Activated T-helper 1 cell treated with anti-CD3 and anti-CD28 coated beads, Interleukin-12 subunit alpha, Interleukin-12 subunit beta, Interleukin-2, Interleukin-4 antibody, amounts not matched to agents 30 ng/mL and 10 ng/mL and 1 ng/mL, durations not matched to agents 14 hours and 24 hours and 36 hours (primary cell): ENCODE measurements at regions of chr15 and their contacts with region 1.

Region 1: GRCh38 chr15:78872972-78873792 is 492 bp downstream of the MORF4L1 start:
- DNase-seq: peak; percentile 87
- H3K4me3 Mint-ChIP-seq: peak overlapping the region; percentile 93
- H3K27ac Mint-ChIP-seq: peak overlapping the region; percentile 98
- H3K4me1 Mint-ChIP-seq: peaks cover 47% of the 10 kb centered on the region
- H3K27me3 Mint-ChIP-seq: no peaks in the 10 kb centered on the region

Region 2: DNA sequence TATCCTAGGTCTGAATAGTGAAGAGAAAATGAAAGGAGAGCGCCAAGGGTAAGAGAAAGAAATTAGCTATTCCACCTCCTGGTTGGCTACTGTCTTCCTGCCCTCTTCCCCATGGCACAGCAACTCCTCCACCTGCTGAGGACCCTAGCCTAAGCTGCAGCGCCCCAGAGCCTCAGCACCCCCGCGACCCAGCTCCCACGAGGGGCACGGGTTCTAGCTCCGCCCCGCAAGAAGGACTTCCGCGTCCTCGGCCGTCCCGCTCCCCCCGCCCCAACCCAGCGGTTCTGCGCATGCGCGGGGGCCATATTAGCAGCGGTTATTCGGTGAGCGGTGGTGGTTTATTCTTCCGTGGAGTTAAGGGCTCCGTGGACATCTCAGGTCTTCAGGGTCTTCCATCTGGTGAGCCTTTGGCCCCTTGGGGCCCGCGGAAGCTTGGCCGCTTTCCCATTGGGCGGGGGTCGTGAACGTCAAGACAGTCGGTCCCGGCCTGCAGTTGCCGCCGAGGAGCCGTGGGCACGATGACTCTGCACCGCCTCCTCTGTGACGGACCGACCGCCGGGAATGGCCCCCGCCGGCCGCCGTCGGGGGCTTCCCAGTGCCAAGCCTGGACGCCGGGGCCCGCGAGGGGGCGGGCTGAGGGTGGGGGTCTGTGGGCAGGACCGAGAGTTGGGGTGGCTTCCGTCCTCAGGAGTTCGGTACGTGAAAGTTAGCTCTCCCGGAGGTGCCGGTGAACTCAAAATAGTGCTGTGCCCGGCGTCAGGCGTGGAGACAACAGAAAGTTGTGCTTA is 332.8 kb before region 1 on chr15 and contains the start of gene PSMA4:
- intact Hi-C with region 1: loop called (anchors 5 kb)
- DNase-seq: peak; percentile 92
- H3K4me3 Mint-ChIP-seq: peak within 1 kb of the TSS; percentile 97
- H3K27ac Mint-ChIP-seq: peak within 1 kb of the TSS; percentile 100
- H3K4me1 Mint-ChIP-seq: peaks cover 42% of the 10 kb centered on the region
- H3K27me3 Mint-ChIP-seq: no peaks in the 10 kb centered on the region
- total RNA-seq, gene PSMA4: 317 and 318 TPM in 2 replicates

Region 3: DNA sequence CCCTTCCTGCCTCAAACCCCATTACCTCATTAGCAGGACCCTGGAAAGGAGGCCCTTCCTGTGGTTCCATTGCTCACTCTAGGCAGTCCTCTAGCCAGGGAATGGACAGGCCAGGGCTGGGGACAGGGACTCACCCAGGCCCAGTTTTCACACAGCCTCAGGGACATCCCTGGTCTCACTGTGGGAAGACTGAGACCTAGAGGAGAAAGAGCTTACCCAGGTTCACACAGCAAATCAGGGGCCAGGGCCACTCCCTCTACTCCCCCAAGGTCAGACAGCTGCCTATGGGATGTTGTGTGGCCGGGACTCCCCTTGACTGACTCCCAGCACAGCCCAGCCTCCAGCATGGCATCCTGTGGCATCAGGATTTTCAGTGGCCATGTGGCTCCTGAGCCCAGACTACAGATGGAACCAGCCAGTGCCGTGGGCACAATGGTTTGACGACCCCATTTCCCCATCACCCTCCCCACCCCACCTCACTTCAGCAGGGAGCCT is 111.2 kb before region 1 on chr15:
- intact Hi-C with region 1: loop called (anchors 2 kb)
- DNase-seq: no peak
- H3K4me3 Mint-ChIP-seq: no peak overlapping the region
- H3K27ac Mint-ChIP-seq: peak overlapping the region; percentile 89
- H3K4me1 Mint-ChIP-seq: peaks cover 17% of the 10 kb centered on the region
- H3K27me3 Mint-ChIP-seq: no peaks in the 10 kb centered on the region

Region 4: GRCh38 chr15:78859971-78860732 is 13.0 kb before region 1 on chr15:
- intact Hi-C with region 1: loop called (anchors 1 kb)
- DNase-seq: peak; percentile 63
- H3K4me3 Mint-ChIP-seq: peak overlapping the region; percentile 81
- H3K27ac Mint-ChIP-seq: peak overlapping the region; percentile 71
- H3K4me1 Mint-ChIP-seq: peaks cover 9% of the 10 kb centered on the region
- H3K27me3 Mint-ChIP-seq: peaks cover 12% of the 10 kb centered on the region

Region 5: GRCh38 chr15:78937132-78937739 is 64.1 kb after region 1 on chr15:
- intact Hi-C with region 1: loop called (anchors 2 kb)
- DNase-seq: peak; percentile 14
- H3K4me3 Mint-ChIP-seq: peak overlapping the region; percentile 56
- H3K27ac Mint-ChIP-seq: peak overlapping the region; percentile 84
- H3K4me1 Mint-ChIP-seq: peaks cover 37% of the 10 kb centered on the region
- H3K27me3 Mint-ChIP-seq: peaks cover under 1% of the 10 kb centered on the region